ENCODE measurements at regions of chr5 and their contacts with region 1.

Region 1: GRCh38 chr5:59390074-59390659 is 503.4 kb downstream of the PDE4D start:
- DNase-seq: no peak
- H3K4me3 ChIP-seq: no peak overlapping the region
- H3K27ac ChIP-seq: peak overlapping the region in 1 of 4 donors; percentile 56
- H3K4me1 ChIP-seq: peaks cover 0 to 6% (median 0%) of the 10 kb centered on the region in 4 donors
- H3K27me3 ChIP-seq: no peaks in the 10 kb centered on the region
- CTCF ChIP-seq: peak; percentile 32 to 79 (median 40)
- EP300 ChIP-seq: no peak
- POLR2A ChIP-seq: no peak

Region 2: DNA sequence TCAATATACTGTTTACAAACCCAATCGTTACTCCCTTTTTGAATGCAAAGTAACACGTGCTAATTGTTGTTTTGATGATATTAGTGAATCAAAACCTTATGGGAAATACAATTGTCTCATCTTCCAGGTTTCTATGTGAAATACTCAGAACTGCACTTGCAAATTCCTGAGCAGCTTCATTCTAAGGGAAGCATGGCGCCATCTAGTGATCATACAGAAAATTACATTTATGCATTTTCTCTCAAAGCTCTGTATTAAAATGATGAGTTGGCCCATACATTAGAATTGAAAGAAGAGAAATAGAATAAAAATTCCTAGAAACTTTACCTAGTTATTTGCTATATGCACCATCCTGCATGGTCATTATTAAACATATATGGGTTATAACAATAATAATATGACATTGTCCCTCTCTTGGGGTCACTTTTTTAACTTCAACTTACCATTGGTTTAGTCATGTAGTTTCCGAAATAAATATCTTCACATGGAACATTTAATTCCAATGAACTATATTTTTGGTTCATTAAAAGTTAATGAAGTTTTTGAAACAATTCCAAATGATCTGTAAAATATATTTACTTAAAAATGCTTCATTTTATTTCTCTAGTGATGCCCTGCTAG is 283.4 kb after region 1 on chr5:
- intact Hi-C with region 1: loop called (anchors 1 kb)
- DNase-seq: no peak
- H3K4me3 ChIP-seq: no peak overlapping the region
- H3K27ac ChIP-seq: no peak overlapping the region
- H3K4me1 ChIP-seq: peaks cover 0 to 26% (median 11%) of the 10 kb centered on the region in 4 donors
- H3K27me3 ChIP-seq: no peaks in the 10 kb centered on the region
- CTCF ChIP-seq: peak; percentile 56 to 81 (median 74)
- EP300 ChIP-seq: no peak
- POLR2A ChIP-seq: no peak

Region 3: DNA sequence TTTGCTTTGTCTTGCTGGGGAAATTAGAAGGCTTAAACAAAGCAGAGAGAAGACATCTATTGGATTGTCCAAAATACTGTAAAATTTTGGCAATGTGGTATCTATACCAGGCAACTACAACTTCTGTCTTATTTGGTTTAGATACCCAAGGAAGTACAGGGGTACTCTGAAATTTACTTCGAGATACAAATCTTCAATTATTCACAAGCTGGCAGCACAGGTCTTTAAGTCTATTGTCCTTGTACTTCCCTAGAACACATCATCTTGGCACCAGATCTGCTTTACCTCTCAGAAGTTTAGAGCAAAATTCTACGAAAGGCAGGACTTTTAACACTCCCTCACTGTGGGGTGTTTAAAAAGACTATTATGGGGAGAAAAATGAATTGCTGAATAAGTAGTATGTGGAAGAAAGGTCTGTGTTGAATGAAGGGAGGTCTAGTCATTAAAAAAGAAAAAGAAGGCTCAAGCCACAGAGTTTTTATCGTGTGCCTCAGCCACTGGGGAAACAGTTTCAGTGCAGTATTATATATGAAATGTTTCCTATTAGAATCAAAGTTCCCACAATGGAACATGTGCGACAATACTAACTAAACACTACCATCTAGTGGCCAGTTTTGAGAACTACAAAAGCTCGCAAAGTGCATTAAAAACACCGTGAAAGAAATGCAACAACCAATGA is 409.6 kb after region 1 on chr5:
- intact Hi-C with region 1: loop called (anchors 1 kb)
- DNase-seq: no peak
- H3K4me3 ChIP-seq: peak overlapping the region in 1 of 4 donors; percentile 22
- H3K27ac ChIP-seq: peak overlapping the region in 3 of 4 donors; percentile 59 to 74 (median 64)
- H3K4me1 ChIP-seq: peaks cover 0 to 28% (median 27%) of the 10 kb centered on the region in 4 donors
- H3K27me3 ChIP-seq: no peaks in the 10 kb centered on the region
- CTCF ChIP-seq: peak; percentile 67 to 83 (median 74)
- EP300 ChIP-seq: no peak
- POLR2A ChIP-seq: no peak

Region 4: DNA sequence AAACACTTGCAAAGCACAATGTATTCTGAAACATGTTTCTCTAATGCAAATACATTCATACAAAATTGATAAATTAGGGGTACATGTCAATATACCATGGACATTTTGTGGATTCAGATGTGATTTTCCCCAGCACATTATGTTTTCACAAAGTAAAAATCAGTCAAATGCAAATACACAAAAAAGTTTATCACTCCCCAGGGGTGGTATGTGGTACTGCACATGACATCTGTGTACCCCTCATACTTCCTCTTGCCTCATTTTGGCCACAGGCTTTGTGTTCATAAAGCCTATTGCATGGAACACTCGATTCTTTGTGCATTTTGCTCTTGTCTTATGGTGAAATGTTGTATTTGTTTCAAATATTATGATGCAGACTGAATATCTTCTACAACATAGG is 620.2 kb after region 1 on chr5:
- intact Hi-C with region 1: no loop called
- DNase-seq: no peak
- H3K4me3 ChIP-seq: no peak overlapping the region
- H3K27ac ChIP-seq: no peak overlapping the region
- H3K4me1 ChIP-seq: no peaks in the 10 kb centered on the region
- H3K27me3 ChIP-seq: no peaks in the 10 kb centered on the region
- CTCF ChIP-seq: peak in 1 of 4 experiments; percentile 11
- EP300 ChIP-seq: no peak
- POLR2A ChIP-seq: no peak